Activated CD4-positive, alpha-beta T cell treated with anti-CD3 and anti-CD28 coated beads, Interleukin-2, amount 10 ng/mL, durations not matched to agents 24 days and 14 days (primary cell): ENCODE measurements at regions of chr7 and their contacts with region 1.

Region 1: DNA sequence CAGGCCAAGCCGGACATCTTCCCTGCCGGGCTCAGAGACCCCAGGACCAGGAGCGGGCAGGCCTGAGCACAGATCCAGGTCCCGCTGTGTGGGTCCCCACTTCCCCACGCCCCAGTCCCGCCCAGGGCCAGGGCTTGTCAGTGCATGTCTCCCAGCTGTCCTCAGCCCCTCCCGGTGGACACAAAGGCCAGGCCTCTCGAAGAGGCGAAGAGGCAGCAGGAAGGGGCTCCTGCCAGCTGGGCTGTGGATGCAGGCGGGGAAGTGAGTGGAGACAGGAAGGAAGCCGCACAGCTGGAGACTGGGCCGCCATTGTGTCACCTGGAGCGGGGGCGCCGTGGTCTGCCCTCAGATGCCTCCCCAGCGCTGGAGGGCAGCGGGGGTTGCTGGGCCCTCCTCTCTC is 4.8 kb downstream of the GRIFIN start:
- DNase-seq: no peak
- H3K4me3 Mint-ChIP-seq: no peak overlapping the region
- H3K27ac Mint-ChIP-seq: no peak overlapping the region
- H3K4me1 Mint-ChIP-seq: peaks cover 2% of the 10 kb centered on the region
- H3K27me3 Mint-ChIP-seq: peaks cover 14% of the 10 kb centered on the region

Region 2: DNA sequence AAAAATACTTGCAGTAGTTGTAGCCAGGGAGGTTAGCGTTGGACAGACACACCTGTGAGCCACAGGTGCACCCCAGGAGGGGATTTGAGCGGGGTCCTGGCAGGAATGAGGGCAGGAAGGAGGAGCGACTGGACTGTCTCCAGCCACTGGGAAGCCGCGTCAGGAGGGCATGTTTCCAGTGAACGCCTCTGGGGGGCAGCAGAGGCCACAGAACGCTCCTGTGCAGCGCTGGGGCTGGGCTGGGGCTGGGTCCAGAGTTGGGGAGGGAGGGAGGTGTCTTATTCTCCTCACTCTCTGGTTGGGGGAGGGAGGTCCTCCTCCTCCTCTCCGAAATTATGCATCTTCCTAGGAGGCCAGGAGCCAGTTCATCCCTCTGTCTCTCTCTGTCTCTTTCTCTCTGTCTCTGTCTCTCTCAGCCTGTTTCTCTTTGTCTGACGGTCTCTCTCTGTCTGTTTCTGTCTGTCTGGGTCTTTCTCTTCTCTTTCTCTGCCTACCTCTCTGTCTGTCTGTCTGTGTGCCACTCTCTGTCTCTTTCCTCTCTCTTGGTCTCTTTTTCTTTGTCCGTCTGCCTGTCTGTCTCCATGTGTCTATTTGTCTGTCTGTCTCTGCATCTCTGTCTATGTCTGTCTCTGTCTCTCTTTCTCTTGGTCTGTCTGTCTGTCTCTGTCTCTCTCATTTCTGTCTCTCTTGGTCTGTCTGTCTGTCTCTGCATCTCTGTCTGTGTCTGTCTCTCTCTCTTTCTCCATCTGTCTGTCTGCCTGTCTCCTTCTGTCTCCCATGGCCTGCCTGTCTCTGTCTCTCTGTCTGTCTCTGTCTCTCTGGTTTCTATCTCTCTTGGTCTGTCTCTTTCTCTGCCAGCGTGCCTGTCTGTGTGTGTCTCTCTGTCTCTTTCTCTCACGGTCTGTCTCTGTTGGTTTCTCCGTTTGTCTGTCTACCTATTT is 891.6 kb before region 1 on chr7:
- intact Hi-C with region 1: loop called (anchors 1 kb)
- DNase-seq: peak; percentile 92
- H3K4me3 Mint-ChIP-seq: no peak overlapping the region
- H3K27ac Mint-ChIP-seq: no peak overlapping the region
- H3K4me1 Mint-ChIP-seq: peaks cover 7% of the 10 kb centered on the region
- H3K27me3 Mint-ChIP-seq: no peaks in the 10 kb centered on the region

Region 3: DNA sequence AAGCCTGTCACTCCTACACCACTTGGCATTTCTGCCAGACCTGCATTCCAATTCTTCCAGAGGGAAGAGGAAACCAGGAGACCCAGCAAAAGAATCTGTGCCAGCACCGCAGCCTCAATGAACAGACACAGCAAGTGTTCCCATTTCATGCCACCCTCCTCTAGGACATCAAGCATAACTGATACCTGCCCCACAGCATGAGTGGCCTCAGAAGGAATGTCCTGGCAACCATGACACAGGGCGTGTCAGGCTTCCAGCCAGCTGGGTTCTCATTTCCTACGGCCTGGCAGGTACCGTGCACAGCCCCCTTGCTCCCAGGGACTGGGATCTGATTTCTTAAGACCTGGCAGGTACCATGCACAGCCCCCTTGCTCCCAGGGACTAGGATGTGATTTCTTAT is 246.5 kb before region 1 on chr7:
- intact Hi-C with region 1: no loop called
- DNase-seq: no peak
- H3K4me3 Mint-ChIP-seq: no peak overlapping the region
- H3K27ac Mint-ChIP-seq: no peak overlapping the region
- H3K4me1 Mint-ChIP-seq: peaks cover 6% of the 10 kb centered on the region
- H3K27me3 Mint-ChIP-seq: no peaks in the 10 kb centered on the region

Region 4: GRCh38 chr7:2451171-2452073 is 20.0 kb before region 1 on chr7:
- intact Hi-C with region 1: loop called (anchors 2 kb)
- DNase-seq: peak; percentile 92
- H3K4me3 Mint-ChIP-seq: peak overlapping the region; percentile 41
- H3K27ac Mint-ChIP-seq: no peak overlapping the region
- H3K4me1 Mint-ChIP-seq: peaks cover 3% of the 10 kb centered on the region
- H3K27me3 Mint-ChIP-seq: peaks cover 8% of the 10 kb centered on the region

Region 5: GRCh38 chr7:2651336-2651735 is 179.9 kb after region 1 on chr7:
- intact Hi-C with region 1: no loop called
- DNase-seq: no peak
- H3K4me3 Mint-ChIP-seq: no peak overlapping the region
- H3K27ac Mint-ChIP-seq: no peak overlapping the region
- H3K4me1 Mint-ChIP-seq: no peaks in the 10 kb centered on the region
- H3K27me3 Mint-ChIP-seq: no peaks in the 10 kb centered on the region